Gastrocnemius medialis (tissue), 4 donors: ENCODE measurements at regions of chr12 and their contacts with region 1.

Region 1: DNA sequence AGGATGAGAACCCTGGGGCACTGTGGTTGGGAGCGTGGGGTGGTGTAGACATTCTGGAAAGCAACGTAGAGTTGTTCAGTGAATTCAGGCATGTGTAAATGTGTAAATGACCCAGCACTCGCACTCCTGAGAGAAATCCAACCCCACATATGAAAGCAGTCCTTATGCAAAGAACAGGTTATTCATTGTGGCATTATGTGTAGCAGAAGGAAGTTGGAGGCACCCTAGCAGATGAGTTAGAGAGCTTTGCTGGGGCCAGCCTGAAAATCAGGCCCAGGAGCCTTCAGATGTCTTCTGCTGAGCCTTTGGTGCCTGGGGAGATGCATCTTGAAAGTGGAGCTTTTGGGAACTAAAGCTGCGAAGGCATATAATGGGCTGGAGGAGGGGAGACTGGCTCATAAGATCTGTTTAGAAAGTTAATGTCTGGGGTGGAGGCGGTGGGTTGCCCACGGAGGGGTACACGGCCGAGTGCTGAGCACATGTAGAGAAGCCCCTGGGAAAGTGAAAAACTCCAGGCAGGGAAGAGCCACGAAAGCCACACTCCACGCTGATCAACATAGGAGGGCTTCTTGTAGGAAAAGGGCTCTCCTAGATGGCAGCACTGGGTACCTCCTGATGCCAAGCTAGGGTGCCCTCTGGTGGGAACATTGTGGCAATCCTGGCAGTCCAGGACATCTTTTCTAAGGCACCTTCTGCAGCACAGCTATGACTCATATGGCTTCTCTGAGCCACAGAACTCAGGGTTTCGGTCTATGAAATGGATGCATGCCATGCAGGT is 6.0 kb upstream of the KRT83 start:
- DNase-seq: peak; percentile 68 to 82
- ATAC-seq: peak; percentile 98 to 99
- H3K4me3 ChIP-seq: no peak overlapping the region
- H3K27ac ChIP-seq: no peak overlapping the region
- H3K4me1 ChIP-seq: no peaks in the 10 kb centered on the region
- H3K27me3 ChIP-seq: peaks cover 0 to 2% (median 2%) of the 10 kb centered on the region in 3 donors
- CTCF ChIP-seq: peak; percentile 64 to 81 (median 66)
- POLR2A ChIP-seq: no peak

Region 2: DNA sequence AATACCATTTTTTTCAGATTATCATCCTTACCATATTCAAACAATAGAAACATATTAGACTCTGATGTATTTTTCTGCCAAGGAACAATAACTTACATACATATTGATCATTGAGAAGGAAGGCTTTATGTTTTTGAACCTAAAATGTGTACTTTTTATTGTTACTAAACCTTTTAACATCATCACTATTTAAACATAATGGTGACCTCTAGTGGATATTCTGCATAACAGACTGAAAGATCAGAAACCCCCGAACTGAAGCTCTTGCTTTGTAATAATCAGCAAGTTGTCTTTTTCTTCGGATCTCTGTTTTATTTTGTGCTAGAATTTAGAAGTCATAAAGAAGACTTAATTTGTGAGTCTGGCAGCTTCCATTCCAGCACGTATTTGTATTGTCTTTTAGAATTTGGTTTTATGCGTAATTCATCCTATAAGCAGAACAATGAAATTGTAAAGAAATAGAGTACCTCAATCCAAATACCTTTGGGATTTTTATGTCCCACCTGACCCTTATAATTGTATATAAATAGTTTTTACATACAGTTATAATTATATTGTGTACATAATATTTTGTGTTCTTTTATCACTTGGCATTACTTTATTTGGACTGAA is 1689.3 kb before region 1 on chr12:
- in situ Hi-C with region 1: no loop called
- intact Hi-C with region 1: no loop called
- DNase-seq: no peak
- ATAC-seq: no peak
- H3K4me3 ChIP-seq: no peak overlapping the region
- H3K27ac ChIP-seq: no peak overlapping the region
- H3K4me1 ChIP-seq: peaks cover 9 to 43% of the 10 kb centered on the region in 2 donors
- H3K27me3 ChIP-seq: no peaks in the 10 kb centered on the region
- CTCF ChIP-seq: peak; percentile 43 to 65 (median 60)
- POLR2A ChIP-seq: no peak

Region 3: GRCh38 chr12:52156736-52157565 is 170.3 kb before region 1 on chr12:
- in situ Hi-C with region 1: loop called (anchors 5 kb)
- intact Hi-C with region 1: loop called (anchors 1 kb)
- DNase-seq: peak; percentile 55 to 67
- ATAC-seq: peak; percentile 69 to 74
- H3K4me3 ChIP-seq: no peak overlapping the region
- H3K27ac ChIP-seq: no peak overlapping the region
- H3K4me1 ChIP-seq: peaks cover 0 to 3% of the 10 kb centered on the region in 2 donors
- H3K27me3 ChIP-seq: no peaks in the 10 kb centered on the region
- CTCF ChIP-seq: peak; percentile 90 to 95 (median 93)
- POLR2A ChIP-seq: no peak

Region 4: GRCh38 chr12:52221912-52222457 is 105.3 kb before region 1 on chr12:
- in situ Hi-C with region 1: no loop called
- intact Hi-C with region 1: loop called (anchors 5 kb)
- DNase-seq: peak in 1 of 2 donors; percentile 68
- ATAC-seq: peak; percentile 29 to 84
- H3K4me3 ChIP-seq: no peak overlapping the region
- H3K27ac ChIP-seq: no peak overlapping the region
- H3K4me1 ChIP-seq: peaks cover 0 to 5% of the 10 kb centered on the region in 2 donors
- H3K27me3 ChIP-seq: no peaks in the 10 kb centered on the region
- CTCF ChIP-seq: peak; percentile 23 to 67 (median 46)
- POLR2A ChIP-seq: no peak

Region 5: DNA sequence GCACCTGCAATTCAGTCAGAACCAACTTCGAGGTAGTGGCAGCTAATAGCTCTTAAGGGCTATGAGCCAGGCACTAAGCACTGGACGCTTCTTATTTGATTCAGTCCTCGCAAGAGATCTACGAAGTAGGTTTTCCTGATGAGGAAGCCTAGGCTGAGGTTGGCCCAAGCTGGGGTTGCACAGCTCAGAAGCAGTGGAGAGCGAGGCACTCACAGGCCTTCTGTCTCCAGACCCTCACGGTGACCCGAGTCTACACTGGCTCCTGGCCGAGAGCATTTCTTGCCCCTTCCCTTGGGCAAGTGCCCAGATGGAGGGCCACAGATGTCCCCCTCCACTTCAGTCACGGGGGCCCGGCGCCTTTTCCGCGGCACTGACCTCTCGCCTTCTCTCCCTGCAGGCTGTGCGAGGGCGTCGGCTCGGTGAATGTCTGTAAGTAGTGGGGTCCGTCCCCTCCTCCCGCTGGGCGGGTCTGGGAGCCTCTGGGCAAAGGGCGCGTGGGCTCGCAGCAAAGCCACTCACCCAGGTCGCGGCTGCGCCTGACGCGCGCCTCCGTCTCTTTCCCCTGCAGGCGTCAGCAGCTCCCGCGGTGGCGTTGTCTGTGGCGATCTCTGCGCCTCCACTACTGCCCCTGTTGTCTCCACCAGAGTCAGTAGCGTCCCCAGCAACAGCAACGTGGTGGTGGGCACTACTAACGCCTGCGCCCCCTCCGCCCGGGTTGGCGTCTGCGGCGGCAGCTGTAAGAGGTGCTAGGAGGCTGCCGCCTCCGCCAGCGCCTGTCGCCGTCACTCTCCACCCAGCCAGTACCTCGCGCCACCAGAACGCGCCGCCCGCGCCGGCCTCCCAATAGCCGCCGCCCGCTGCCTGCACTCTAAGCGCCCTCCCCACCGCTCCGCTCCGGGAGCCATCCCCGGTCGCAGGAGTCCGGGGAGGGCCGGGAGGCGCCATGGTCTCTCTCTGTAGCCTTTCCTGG is 19.1 kb before region 1 on chr12:
- in situ Hi-C with region 1: no loop called
- intact Hi-C with region 1: loop called (anchors 2 kb)
- DNase-seq: peak; percentile 19 to 76
- ATAC-seq: peak; percentile 89 to 94
- H3K4me3 ChIP-seq: peak overlapping the region; percentile 51 to 78 (median 54)
- H3K27ac ChIP-seq: peak overlapping the region in 2 of 4 donors; percentile 35 to 77
- H3K4me1 ChIP-seq: peaks cover 5 to 8% of the 10 kb centered on the region in 2 donors
- H3K27me3 ChIP-seq: no peaks in the 10 kb centered on the region
- CTCF ChIP-seq: peak in 4 of 5 experiments; percentile 24 to 51 (median 33)
- POLR2A ChIP-seq: peak in 1 of 2 donors; percentile 33